Aorta (tissue), 5 donors: ENCODE measurements at regions of chr15 and their contacts with region 1.

Region 1: GRCh38 chr15:69648212-69648611 is 195.6 kb downstream of the RPLP1 start:
- DNase-seq: peak in 1 of 2 donors; percentile 52
- ATAC-seq: no peak
- H3K4me3 ChIP-seq: no peak overlapping the region
- H3K27ac ChIP-seq: no peak overlapping the region
- H3K4me1 ChIP-seq: no peaks in the 10 kb centered on the region
- H3K27me3 ChIP-seq: no peaks in the 10 kb centered on the region

Region 2: GRCh38 chr15:69475769-69476358 is 172.3 kb before region 1 on chr15:
- intact Hi-C with region 1: loop called (anchors 2 to 5 kb)
- DNase-seq: peak; percentile 83 to 92
- ATAC-seq: peak; percentile 91
- H3K4me3 ChIP-seq: no peak overlapping the region
- H3K27ac ChIP-seq: no peak overlapping the region
- H3K4me1 ChIP-seq: no peaks in the 10 kb centered on the region
- H3K27me3 ChIP-seq: no peaks in the 10 kb centered on the region

Region 3: GRCh38 chr15:69502470-69503045 is 145.7 kb before region 1 on chr15:
- intact Hi-C with region 1: no loop called
- DNase-seq: no peak
- ATAC-seq: no peak
- H3K4me3 ChIP-seq: no peak overlapping the region
- H3K27ac ChIP-seq: no peak overlapping the region
- H3K4me1 ChIP-seq: no peaks in the 10 kb centered on the region
- H3K27me3 ChIP-seq: no peaks in the 10 kb centered on the region

Region 4: GRCh38 chr15:69523010-69524001 is 124.9 kb before region 1 on chr15:
- intact Hi-C with region 1: loop called in 1 of 2 experiments (anchors 2 kb)
- DNase-seq: peak; percentile 88 to 91
- ATAC-seq: no peak
- H3K4me3 ChIP-seq: no peak overlapping the region
- H3K27ac ChIP-seq: no peak overlapping the region
- H3K4me1 ChIP-seq: no peaks in the 10 kb centered on the region
- H3K27me3 ChIP-seq: no peaks in the 10 kb centered on the region

Region 5: DNA sequence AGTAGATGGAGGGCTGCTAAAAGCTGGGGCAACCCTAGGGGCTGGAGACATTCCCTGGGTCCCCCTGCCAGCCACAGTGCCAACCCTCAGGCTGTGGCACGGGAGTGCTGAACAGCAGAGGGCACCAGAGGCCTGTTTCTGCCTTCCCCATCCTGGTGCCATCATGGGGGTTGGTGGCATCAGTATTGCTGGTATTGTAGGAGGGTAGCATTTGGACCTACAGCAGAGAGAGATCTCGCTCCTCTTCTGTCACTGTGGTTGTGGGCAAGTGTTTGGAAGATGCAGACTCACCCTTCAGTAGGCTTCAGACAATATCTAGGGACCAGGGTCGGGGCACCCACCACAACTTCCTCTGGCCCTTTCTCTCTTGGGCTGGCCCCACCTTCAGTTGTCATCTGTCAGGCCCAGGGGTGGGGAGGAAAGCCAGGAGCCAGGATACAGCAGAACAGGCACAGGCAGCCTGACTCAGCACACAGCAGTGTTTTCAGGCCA is 72.1 kb before region 1 on chr15:
- intact Hi-C with region 1: loop called (anchors 2 kb)
- DNase-seq: peak; percentile 79 to 86
- ATAC-seq: peak; percentile 79
- H3K4me3 ChIP-seq: no peak overlapping the region
- H3K27ac ChIP-seq: no peak overlapping the region
- H3K4me1 ChIP-seq: no peaks in the 10 kb centered on the region
- H3K27me3 ChIP-seq: no peaks in the 10 kb centered on the region

Region 6: DNA sequence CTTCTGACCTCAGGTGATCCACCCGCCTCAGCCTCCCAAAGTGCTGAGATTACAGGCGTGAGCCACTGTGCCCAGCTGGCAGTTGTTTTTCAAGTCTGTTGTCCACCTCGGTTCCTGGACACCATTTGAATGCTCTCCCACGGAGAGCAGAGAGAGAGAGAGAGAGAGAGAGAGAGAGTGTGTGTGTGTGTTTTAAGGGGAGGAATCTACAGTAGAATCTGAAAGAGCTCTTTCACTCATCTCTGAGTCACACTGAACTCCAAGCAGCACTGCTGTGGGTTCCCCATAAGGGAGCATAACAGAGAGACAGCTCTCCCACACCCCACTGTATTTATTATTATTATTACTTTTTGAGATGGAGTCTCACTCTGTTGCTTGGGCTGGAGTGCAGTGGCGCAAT is 39.0 kb before region 1 on chr15:
- intact Hi-C with region 1: loop called in 1 of 2 experiments (anchors 5 kb)
- DNase-seq: no peak
- ATAC-seq: no peak
- H3K4me3 ChIP-seq: no peak overlapping the region
- H3K27ac ChIP-seq: no peak overlapping the region
- H3K4me1 ChIP-seq: peaks cover 0 to 3% of the 10 kb centered on the region in 2 donors
- H3K27me3 ChIP-seq: no peaks in the 10 kb centered on the region

Region 7: GRCh38 chr15:69823218-69823907 is 175.2 kb after region 1 on chr15:
- intact Hi-C with region 1: no loop called
- DNase-seq: peak in 1 of 2 donors; percentile 57
- ATAC-seq: no peak
- H3K4me3 ChIP-seq: no peak overlapping the region
- H3K27ac ChIP-seq: no peak overlapping the region
- H3K4me1 ChIP-seq: no peaks in the 10 kb centered on the region
- H3K27me3 ChIP-seq: no peaks in the 10 kb centered on the region

Region 8: GRCh38 chr15:69869881-69870505 is 221.8 kb after region 1 on chr15:
- intact Hi-C with region 1: no loop called
- DNase-seq: no peak
- ATAC-seq: no peak
- H3K4me3 ChIP-seq: no peak overlapping the region
- H3K27ac ChIP-seq: no peak overlapping the region
- H3K4me1 ChIP-seq: no peaks in the 10 kb centered on the region
- H3K27me3 ChIP-seq: no peaks in the 10 kb centered on the region